Left cardiac atrium (tissue), 4 donors: ENCODE measurements at regions of chr15 and their contacts with region 1.

Region 1: DNA sequence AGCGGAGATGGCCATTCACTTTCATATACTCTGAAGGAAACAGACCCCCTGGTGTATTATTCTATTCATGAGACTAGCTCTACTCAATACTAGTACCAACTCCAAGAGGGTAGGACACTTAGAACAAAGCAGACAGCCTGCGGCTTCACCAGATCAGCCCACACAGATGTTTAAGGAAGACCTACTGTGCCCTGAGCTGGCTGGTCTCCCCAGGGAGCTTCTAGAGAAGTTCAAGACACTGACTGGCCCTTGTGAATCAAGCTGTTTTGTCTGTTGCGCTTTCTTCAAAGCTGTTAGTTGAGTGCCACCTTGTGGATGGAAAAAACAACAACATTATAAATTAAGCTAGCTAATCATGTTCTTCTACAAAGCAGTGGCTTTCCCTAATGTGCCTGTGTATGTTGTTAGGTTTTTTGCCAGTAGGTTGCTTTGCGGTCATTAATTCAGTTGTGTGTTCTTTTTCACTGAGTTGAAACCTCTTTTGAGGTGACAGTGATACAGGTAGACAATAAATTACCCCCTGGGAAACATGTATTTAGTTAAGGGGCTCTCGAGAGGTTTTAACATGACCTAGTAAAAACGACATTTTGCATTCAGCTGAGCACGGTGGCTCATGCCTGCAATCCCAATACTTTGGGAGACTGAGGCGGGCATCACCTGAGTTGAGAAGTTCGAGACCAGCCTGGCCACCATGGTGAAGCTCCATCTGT is 64.2 kb upstream of the MYZAP start:
- DNase-seq: peak; percentile 54
- ATAC-seq: peak; percentile 80 to 83

Region 2: GRCh38 chr15:57340682-57341259 is 186.8 kb before region 1 on chr15:
- intact Hi-C with region 1: loop called (anchors 2 kb)
- DNase-seq: peak; percentile 58
- ATAC-seq: peak; percentile 57 to 66